K562 (cell line): ENCODE measurements at regions of chr1 and their contacts with region 1.

Region 1: DNA sequence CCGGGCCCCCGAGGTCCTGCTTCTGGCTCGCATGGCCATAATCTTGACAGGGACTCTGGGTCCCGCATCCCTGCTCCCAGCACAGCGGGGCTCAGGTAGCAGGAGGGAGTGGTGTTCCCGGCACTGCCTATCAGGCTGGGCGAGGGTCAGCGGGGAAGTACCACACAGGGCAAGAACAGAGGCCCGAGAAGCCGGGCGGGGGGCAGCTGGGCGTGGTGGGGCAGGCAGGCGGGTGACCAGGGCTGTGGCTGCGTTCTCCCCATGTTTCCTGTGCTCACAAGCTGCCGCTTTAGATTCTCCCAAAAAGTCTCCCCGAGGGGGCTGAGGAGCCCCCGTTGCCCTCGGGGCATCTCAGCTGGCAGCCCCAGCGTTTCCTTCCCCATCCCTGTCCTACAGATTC is 18.3 kb downstream of the ATAD3B start:
- DNase-seq: peak in 2 of 4 experiments; percentile 1 to 5
- ATAC-seq: no peak
- H3K4me3 ChIP-seq: no peak overlapping the region
- H3K27ac ChIP-seq: no peak overlapping the region
- H3K4me1 ChIP-seq: peaks cover 0 to 4% of the 10 kb centered on the region in 2 experiments; a peak in 1 of 5 replicates
- H3K27me3 ChIP-seq: no peaks in the 10 kb centered on the region
- CTCF ChIP-seq: no peak
- EP300 ChIP-seq: no peak
- POLR2A ChIP-seq: no peak
- RAD21 ChIP-seq: no peak

Region 2: GRCh38 chr1:1449099-1449739 is 40.6 kb before region 1 on chr1 and contains the start of gene ATAD3C:
- CTCF ChIA-PET with region 1: no interaction called
- POLR2A ChIA-PET with region 1: no interaction called
- in situ Hi-C with region 1: loop called (anchors 5 kb)
- intact Hi-C with region 1: no loop called
- DNase-seq: no peak
- ATAC-seq: no peak
- H3K4me3 ChIP-seq: no peak within 1 kb of the TSS
- H3K27ac ChIP-seq: no peak within 1 kb of the TSS
- H3K4me1 ChIP-seq: peaks cover 0 to 19% of the 10 kb centered on the region in 2 experiments; a peak in 3 of 5 replicates
- H3K27me3 ChIP-seq: no peaks in the 10 kb centered on the region
- CTCF ChIP-seq: no peak
- EP300 ChIP-seq: no peak
- POLR2A ChIP-seq: no peak
- RAD21 ChIP-seq: no peak
- polyA plus RNA-seq, gene ATAD3C: not detected